HEK293 (cell line): ENCODE measurements at regions of chr20 and their contacts with region 1.

Region 1: DNA sequence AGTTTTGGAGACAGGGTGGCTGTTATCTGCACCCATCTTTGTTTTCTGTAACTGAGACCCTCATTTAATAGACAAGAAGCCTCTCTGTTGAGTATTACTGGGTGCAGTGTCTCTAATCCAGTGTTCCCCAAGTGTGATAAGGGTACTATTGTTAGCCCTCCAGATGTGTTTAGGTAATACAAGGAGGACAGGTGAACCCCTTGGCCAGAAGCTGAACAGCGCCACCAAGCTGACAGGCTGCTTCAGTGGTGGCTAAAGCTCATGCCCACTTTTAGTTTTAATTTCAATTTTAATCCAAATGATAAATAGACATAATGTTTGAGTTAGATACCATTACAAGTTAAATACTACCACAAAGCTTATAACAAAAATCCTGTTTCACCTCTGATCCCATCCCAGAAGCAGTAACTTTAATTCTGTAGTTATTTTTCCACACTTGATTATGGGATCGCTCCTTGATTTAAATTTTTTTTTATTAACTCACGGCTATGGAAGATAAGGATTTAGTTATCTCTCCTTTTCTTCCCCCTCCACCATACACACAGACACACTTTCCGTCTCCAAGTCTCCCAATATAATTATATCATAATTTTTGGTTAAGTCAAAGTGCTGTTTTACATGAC is 8.4 kb upstream of the STK35 start:
- H3K4me3 ChIP-seq: no peak overlapping the region
- H3K27ac ChIP-seq: no peak overlapping the region
- H3K4me1 ChIP-seq: no peaks in the 10 kb centered on the region
- CTCF ChIP-seq: no peak

Region 2: GRCh38 chr20:1757072-1757471 is 336.2 kb before region 1 on chr20:
- CTCF ChIA-PET with region 1: interaction called, 4 read pairs
- POLR2A ChIA-PET with region 1: interaction called, 10 read pairs
- H3K4me3 ChIP-seq: no peak overlapping the region
- H3K27ac ChIP-seq: no peak overlapping the region
- H3K4me1 ChIP-seq: no peaks in the 10 kb centered on the region
- CTCF ChIP-seq: no peak

Region 3: DNA sequence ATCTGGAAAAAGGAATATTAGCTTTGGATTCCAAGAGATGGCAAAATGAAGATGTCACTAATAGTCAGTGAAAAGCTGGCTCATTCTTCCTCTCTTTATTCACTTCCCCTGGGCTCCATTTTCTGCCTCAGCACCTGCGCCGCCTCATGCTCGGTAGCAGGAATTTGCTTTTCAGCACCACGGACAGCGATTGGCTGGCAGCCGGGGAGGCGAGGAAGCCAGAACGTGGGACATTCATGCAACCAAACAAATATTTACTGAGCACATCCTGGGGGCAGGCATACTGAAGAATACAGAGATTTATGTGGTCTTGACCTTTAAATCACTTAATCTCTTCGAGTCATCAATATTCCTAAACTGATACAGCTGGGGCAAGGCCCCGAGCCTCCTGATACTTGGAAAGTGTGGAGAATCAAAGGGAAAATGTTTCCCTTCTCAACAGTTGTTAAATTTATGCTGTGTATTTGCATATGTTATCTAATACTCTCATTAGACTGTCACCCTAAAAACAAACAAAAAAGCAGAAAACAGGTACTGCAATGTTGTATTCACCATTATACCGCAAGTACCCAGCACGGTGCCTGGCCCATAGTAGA is 87.3 kb before region 1 on chr20:
- CTCF ChIA-PET with region 1: interaction called, 51 read pairs
- POLR2A ChIA-PET with region 1: no interaction called
- H3K4me3 ChIP-seq: no peak overlapping the region
- H3K27ac ChIP-seq: no peak overlapping the region
- H3K4me1 ChIP-seq: no peaks in the 10 kb centered on the region
- CTCF ChIP-seq: no peak

Region 4: GRCh38 chr20:2080533-2081224 is 12.6 kb before region 1 on chr20:
- CTCF ChIA-PET with region 1: interaction called, 15 read pairs
- POLR2A ChIA-PET with region 1: interaction called, 3 read pairs
- H3K4me3 ChIP-seq: no peak overlapping the region
- H3K27ac ChIP-seq: no peak overlapping the region
- H3K4me1 ChIP-seq: no peaks in the 10 kb centered on the region
- CTCF ChIP-seq: no peak

Region 5: DNA sequence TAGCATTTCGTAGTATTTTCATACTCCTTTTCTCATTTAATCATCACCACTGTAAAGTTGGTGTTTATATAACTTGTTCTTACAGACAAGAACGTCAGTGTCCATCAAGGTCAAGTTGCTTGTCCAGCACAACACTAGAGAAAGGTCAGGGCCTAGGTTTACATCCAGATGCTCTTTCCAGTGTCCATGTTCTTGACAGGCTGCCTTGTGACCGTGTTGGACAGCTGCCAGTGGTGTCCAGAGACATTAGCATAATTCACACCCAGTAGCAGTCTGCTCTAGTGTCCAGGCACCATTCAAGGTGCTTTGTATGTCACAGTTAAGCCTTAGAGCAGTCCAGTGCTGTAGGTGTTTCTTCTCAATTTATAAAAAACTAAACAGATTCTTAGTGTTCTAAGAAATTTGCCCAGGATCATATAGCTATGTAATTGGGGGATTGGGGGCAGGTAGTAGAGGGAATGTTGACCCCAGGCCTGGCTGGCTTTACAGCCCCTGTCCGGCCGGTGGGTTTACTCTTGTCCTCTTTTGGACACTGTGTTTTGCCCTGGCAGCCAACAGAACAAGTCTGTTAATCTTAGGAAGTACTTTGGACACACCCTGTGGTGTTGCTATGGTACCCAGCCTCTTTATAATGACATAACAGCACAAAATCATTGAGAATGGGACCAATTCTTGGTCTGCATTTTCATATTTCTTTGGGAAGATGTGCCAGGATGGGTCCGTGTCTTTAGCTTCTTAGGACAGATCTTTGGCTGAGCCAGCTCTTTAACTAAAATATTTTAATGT is 16.3 kb after region 1 on chr20:
- CTCF ChIA-PET with region 1: interaction called, 16 read pairs
- POLR2A ChIA-PET with region 1: no interaction called
- H3K4me3 ChIP-seq: no peak overlapping the region
- H3K27ac ChIP-seq: no peak overlapping the region
- H3K4me1 ChIP-seq: peaks cover 17% of the 10 kb centered on the region
- CTCF ChIP-seq: no peak

Region 6: DNA sequence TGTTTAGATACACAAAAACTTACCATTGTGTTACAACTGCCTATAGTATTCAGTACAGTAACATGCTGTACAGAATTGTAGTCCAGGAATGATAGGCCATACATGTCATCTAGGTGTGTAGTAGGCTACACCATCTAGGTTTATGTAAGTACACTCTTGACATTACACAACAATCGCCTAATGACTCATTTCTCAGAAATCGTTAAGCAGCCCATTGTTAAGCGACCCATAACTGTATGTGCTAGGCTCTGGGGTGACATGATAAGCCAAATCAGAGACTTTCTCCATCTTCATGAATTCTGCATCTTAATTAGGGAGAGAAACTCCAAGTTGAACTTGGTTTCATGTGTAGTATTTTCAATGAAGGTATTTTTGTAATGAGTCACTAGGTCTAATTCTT is 25.5 kb after region 1 on chr20:
- CTCF ChIA-PET with region 1: interaction called, 10 read pairs
- POLR2A ChIA-PET with region 1: no interaction called
- H3K4me3 ChIP-seq: no peak overlapping the region
- H3K27ac ChIP-seq: no peak overlapping the region
- H3K4me1 ChIP-seq: peaks cover 4% of the 10 kb centered on the region
- CTCF ChIP-seq: no peak

Region 7: DNA sequence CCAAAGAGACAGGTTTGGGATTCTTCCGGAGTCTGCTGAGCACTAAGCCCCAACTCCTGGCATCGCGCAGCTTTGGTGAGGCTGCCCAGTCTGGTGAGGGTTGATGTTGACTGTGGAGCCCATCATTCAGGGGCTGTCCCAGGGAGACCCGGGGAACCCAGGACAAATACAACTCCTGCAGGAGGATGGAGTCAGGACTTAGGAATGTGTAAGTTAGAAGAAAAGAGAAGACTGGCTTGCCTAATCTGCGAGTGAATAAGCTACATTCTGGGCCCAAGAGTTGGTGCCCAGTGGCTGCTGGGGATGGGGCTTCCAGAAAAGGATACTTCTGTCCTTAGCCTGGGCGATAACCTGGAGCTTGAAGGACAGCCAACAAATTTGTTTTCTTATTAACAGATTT is 56.2 kb after region 1 on chr20:
- CTCF ChIA-PET with region 1: no interaction called
- POLR2A ChIA-PET with region 1: no interaction called
- H3K4me3 ChIP-seq: no peak overlapping the region
- H3K27ac ChIP-seq: no peak overlapping the region
- H3K4me1 ChIP-seq: no peaks in the 10 kb centered on the region
- CTCF ChIP-seq: no peak